HCT116 (cell line): ENCODE measurements at regions of chr3 and their contacts with region 1.

Region 1: DNA sequence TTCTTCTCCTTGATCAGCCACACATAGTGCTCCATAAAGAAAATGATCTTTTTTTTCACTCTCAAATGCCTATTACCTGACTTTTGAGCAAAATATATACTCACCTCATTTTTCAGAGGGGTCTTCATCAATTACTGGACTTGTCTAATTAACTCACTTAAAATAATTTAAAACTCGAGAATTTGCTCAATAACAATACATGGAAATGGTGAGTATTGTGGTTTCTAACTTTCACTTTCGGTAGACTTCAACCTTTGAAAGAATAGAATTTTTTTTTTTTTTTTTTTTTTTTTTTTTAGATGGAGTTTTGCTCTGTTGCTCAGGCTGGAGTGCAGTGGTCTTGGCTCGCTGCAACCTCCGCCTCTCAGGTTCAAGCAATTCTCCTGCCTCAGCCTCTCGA is 17.7 kb upstream of the EPHB1 start:
- DNase-seq: no peak
- ATAC-seq: no peak
- H3K4me3 ChIP-seq: no peak overlapping the region
- H3K27ac ChIP-seq: no peak overlapping the region
- H3K4me1 ChIP-seq: no peaks in the 10 kb centered on the region
- H3K27me3 ChIP-seq: peaks cover 32% of the 10 kb centered on the region
- CTCF ChIP-seq: no peak
- POLR2A ChIP-seq: no peak
- RAD21 ChIP-seq: no peak

Region 2: GRCh38 chr3:136036306-136036705 is 1259.0 kb after region 1 on chr3:
- CTCF ChIA-PET with region 1: no interaction called
- POLR2A ChIA-PET with region 1: no interaction called
- RAD21 ChIA-PET with region 1: no interaction called
- intact Hi-C with region 1: loop called (anchors 10 kb)
- DNase-seq: no peak
- ATAC-seq: no peak
- H3K4me3 ChIP-seq: no peak overlapping the region
- H3K27ac ChIP-seq: no peak overlapping the region
- H3K4me1 ChIP-seq: no peaks in the 10 kb centered on the region
- H3K27me3 ChIP-seq: no peaks in the 10 kb centered on the region
- CTCF ChIP-seq: no peak
- POLR2A ChIP-seq: no peak
- RAD21 ChIP-seq: no peak

Region 3: DNA sequence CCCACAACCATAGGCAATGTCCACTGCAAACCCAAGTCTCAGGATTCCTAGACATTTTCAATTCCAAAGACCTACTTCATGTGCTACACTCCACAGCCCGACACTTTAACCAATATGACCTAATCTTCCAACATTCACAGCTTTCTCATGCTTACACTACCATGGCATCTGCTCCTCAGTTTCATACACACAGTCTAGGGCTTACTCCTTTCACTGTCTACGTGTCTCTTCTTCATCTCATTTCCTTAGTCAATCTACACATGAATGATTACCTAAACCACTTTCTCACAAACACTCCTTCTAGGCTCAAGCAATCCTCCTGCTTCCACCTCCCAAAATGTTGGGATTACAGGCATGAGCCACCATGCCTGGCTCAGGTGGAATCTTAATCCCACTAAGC is 1868.6 kb after region 1 on chr3:
- CTCF ChIA-PET with region 1: no interaction called
- POLR2A ChIA-PET with region 1: no interaction called
- RAD21 ChIA-PET with region 1: no interaction called
- intact Hi-C with region 1: no loop called
- DNase-seq: no peak
- ATAC-seq: no peak
- H3K4me3 ChIP-seq: no peak overlapping the region
- H3K27ac ChIP-seq: no peak overlapping the region
- H3K4me1 ChIP-seq: peaks cover 5 to 11% of the 10 kb centered on the region in 2 experiments
- H3K27me3 ChIP-seq: no peaks in the 10 kb centered on the region
- CTCF ChIP-seq: no peak
- POLR2A ChIP-seq: no peak
- RAD21 ChIP-seq: no peak